PC-9 (cell line): ENCODE measurements at regions of chr11 and their contacts with region 1.

Region 1: DNA sequence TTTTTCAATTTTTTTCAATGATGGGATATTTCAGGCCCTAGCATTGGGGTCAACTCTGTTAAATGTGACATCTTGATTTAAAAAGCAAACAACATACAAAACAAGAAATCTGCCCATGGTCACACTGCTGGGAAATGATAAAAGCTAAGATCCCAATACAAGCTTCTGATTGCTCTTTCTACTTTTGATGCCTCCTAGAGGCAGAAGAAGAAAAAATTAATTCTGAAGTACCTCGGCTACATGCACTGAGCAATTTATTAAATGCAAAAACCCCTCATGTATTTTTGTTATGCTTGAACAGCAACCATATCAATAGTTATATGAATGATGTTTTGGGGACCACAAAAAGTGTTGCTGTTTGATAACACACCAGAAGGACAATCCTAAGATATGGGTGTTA is 342.1 kb upstream of the NARS2 start:
- DNase-seq: no peak
- H3K4me3 ChIP-seq: no peak overlapping the region
- H3K27ac ChIP-seq: no peak overlapping the region
- H3K4me1 ChIP-seq: no peaks in the 10 kb centered on the region
- H3K27me3 ChIP-seq: peaks cover 99% of the 10 kb centered on the region
- CTCF ChIP-seq: peak; percentile 17; the same call in 1 of the 2 replicates

Region 2: GRCh38 chr11:78744202-78744601 is 172.6 kb before region 1 on chr11:
- CTCF ChIA-PET with region 1: no interaction called
- POLR2A ChIA-PET with region 1: interaction called, 19 read pairs
- intact Hi-C with region 1: no loop called
- DNase-seq: no peak
- H3K4me3 ChIP-seq: no peak overlapping the region
- H3K27ac ChIP-seq: no peak overlapping the region
- H3K4me1 ChIP-seq: no peaks in the 10 kb centered on the region
- H3K27me3 ChIP-seq: peaks cover 90% of the 10 kb centered on the region
- CTCF ChIP-seq: no peak

Region 3: GRCh38 chr11:78767027-78767932 is 149.5 kb before region 1 on chr11:
- CTCF ChIA-PET with region 1: no interaction called
- POLR2A ChIA-PET with region 1: no interaction called
- intact Hi-C with region 1: no loop called
- DNase-seq: no peak
- H3K4me3 ChIP-seq: no peak overlapping the region
- H3K27ac ChIP-seq: no peak overlapping the region
- H3K4me1 ChIP-seq: no peaks in the 10 kb centered on the region
- H3K27me3 ChIP-seq: peaks cover 59% of the 10 kb centered on the region
- CTCF ChIP-seq: no peak

Region 4: GRCh38 chr11:78982473-78982872 is 65.7 kb after region 1 on chr11:
- CTCF ChIA-PET with region 1: no interaction called
- POLR2A ChIA-PET with region 1: no interaction called
- intact Hi-C with region 1: no loop called
- DNase-seq: no peak
- H3K4me3 ChIP-seq: no peak overlapping the region
- H3K27ac ChIP-seq: no peak overlapping the region
- H3K4me1 ChIP-seq: no peaks in the 10 kb centered on the region
- H3K27me3 ChIP-seq: peaks cover 56% of the 10 kb centered on the region
- CTCF ChIP-seq: no peak